Left ventricle myocardium inferior (tissue), 1 donor: ENCODE measurements at regions of chr15 and their contacts with region 1.

Region 1: DNA sequence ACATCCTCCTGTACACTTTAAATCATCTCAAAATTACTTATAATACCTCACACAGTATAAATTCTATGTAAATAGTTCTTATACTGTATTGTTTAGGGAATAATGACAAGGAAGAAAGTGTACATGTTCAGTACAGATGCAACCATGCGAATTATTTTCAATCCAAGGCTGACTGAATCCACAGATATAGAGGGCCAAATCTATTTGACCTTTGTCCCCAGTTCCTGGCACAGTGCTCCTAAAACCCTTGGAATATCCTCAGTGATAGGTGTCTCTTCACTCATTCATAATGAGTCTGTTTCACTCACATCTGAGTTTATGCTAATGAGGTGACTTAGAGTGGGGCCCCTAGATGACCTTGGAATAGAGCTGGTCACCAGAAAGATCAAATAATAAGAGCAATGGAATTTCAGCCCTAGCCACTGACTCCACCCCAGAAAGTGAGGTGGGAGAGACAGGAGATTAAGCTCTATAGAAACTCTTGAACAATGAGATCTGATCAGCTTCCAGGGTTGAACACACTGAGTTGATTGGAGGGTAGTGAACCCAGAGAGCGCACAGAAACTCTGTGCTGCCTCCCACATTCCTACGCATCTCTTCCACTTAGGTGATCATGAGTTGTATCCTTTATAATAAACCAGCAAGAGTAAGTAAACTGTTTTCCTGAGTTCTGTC is 65.3 kb downstream of the ADAM10 start:
- DNase-seq: no peak
- H3K4me3 ChIP-seq: no peak overlapping the region
- H3K27ac ChIP-seq: no peak overlapping the region
- H3K4me1 ChIP-seq: peaks cover 36% of the 10 kb centered on the region
- H3K27me3 ChIP-seq: no peaks in the 10 kb centered on the region
- CTCF ChIP-seq: no peak

Region 2: DNA sequence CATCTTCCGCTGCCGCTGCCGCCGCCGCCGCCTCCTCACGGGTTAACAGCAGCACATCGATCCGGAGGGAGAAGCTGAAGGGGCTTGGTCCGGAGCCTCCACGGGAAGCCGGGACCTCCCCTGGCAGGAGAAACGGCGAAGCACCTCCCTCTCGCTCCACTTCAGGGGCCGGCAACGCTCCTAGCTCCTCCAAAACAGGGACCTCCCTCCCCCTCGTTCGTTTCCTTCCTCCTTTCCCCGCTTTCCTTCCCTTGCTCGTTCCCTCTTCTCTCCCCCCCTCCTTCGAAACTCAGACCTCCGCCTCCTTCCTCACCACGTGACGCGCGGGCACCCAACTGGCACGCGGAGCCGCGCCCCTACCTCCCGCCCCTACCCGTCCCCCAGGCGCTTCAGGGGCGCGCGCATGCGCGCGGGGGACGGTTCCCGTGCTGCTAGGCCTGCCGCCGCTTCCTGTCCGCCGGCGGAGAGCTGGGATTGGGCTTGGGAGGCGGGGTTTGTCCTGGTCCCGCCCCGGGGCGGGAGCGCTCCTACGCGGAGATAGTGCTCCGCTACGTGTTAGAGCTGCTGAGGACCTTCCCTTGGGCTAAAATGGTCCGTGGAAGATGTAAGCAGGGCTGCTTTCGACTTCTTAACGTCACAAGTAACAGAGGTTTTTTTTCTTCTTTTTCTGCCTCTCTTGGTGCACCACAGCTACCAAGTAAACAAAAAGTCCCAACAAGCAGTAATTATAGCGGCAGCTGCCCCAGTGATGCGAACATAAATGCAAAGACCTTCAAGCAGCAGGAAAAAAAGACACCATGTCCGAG is 65.6 kb after region 1 on chr15 and contains the start of gene ADAM10:
- intact Hi-C with region 1: loop called (anchors 10 kb)
- DNase-seq: peak; percentile 99
- H3K4me3 ChIP-seq: peak within 1 kb of the TSS; percentile 89
- H3K27ac ChIP-seq: peak within 1 kb of the TSS; percentile 98
- H3K4me1 ChIP-seq: peaks cover 50% of the 10 kb centered on the region
- H3K27me3 ChIP-seq: no peaks in the 10 kb centered on the region
- CTCF ChIP-seq: no peak
- total RNA-seq, gene ADAM10: 74.0 TPM

Region 3: GRCh38 chr15:58770857-58771620 is 86.9 kb after region 1 on chr15 and contains the start of gene MINDY2:
- intact Hi-C with region 1: no loop called
- DNase-seq: peak; percentile 99
- H3K4me3 ChIP-seq: peak within 1 kb of the TSS; percentile 99
- H3K27ac ChIP-seq: peak within 1 kb of the TSS; percentile 100
- H3K4me1 ChIP-seq: peaks cover 61% of the 10 kb centered on the region
- H3K27me3 ChIP-seq: no peaks in the 10 kb centered on the region
- CTCF ChIP-seq: peak; percentile 38
- total RNA-seq, gene MINDY2: 40.5 TPM

Region 4: DNA sequence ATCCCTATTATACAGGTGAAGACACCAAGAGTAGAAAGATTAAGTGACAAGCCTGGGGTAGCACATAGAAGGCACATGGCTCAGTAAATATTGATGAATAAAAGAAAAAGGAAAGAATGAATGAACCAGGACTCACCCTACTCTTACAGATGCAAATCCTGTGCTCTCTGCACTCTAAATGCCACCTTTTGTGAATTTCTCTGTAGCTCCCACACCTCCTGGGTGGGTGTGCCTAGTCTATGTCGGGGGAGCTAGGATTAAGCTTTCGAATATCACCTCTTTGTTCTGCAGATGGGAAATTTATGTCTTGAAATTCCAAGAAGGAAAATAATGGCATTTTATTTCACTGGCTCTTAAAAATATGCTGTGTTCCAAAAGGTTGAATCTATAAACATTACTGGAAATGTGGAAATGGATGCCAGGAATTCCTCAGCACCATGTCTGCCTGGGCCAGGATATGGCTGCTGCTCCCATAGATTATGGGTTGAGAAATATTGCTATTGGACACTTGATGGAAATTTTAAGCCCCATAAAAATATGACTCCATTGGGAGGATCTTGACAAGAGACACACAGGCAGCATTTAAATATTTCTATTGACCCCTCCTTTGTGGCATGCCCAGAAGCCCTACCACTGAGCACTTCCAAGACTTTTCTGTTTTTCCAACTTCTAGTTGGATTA is 464.1 kb after region 1 on chr15:
- intact Hi-C with region 1: no loop called
- DNase-seq: no peak
- H3K4me3 ChIP-seq: no peak overlapping the region
- H3K27ac ChIP-seq: no peak overlapping the region
- H3K4me1 ChIP-seq: no peaks in the 10 kb centered on the region
- H3K27me3 ChIP-seq: no peaks in the 10 kb centered on the region
- CTCF ChIP-seq: no peak